AG04450 (cell line): ENCODE measurements at regions of chr12 and their contacts with region 1.

Region 1: GRCh38 chr12:59403259-59403932 is 192.4 kb upstream of the SLC16A7 start:
- DNase-seq: peak; percentile 52
- H3K4me3 ChIP-seq: peak overlapping the region; percentile 40
- H3K27ac ChIP-seq: no peak overlapping the region
- H3K27me3 ChIP-seq: no peaks in the 10 kb centered on the region
- CTCF ChIP-seq: peak; percentile 91

Region 2: GRCh38 chr12:59425798-59426197 is 22.4 kb after region 1 on chr12:
- CTCF ChIA-PET with region 1: interaction called, 11 read pairs
- POLR2A ChIA-PET with region 1: no interaction called
- DNase-seq: no peak
- H3K4me3 ChIP-seq: no peak overlapping the region
- H3K27ac ChIP-seq: no peak overlapping the region
- H3K27me3 ChIP-seq: no peaks in the 10 kb centered on the region
- CTCF ChIP-seq: no peak

Region 3: DNA sequence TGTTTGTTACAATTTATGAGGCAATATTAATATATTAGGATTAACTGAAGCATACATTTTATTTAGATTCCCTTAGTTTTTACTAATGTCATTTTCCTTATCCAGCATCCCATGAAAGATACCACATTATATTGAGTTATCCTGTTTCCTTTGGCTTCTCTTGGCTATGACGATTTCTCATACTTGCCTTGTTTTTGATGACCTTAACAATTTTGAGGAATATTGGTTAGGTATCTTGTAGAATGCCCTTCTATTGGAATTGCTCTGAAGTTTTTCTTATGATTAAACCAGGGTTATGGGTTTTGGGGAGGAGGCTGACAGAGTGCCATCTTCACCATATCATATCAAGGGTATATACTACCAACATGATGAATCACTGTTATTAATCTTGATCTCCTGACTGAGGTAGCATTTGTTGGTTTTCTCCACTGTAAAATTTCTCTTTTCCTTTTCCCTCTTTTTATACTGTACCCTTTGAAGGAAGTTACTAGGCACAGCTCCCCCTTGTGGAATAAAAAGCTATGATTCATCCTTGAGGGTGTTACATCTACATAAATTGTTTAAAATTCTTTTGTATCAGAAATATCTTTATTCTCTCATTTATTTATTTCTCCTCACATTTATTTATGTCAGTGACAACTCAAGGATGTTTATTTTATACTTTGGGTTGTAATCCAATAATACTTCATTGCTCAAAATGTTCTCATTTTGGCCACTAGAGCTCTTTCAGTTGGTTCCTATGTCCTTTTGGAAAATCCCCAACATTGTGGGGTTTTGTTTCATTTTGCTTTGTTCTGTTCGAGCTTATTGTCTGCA is 431.5 kb after region 1 on chr12:
- CTCF ChIA-PET with region 1: interaction called, 13 read pairs
- POLR2A ChIA-PET with region 1: no interaction called
- DNase-seq: no peak
- H3K4me3 ChIP-seq: no peak overlapping the region
- H3K27ac ChIP-seq: no peak overlapping the region
- H3K27me3 ChIP-seq: no peaks in the 10 kb centered on the region
- CTCF ChIP-seq: peak; percentile 57